ENCODE measurements at regions of chr2 and their contacts with region 1.

Region 1: GRCh38 chr2:190511104-190511503 is 23.4 kb downstream of the NEMP2 start:
- DNase-seq: no peak
- ATAC-seq: no peak
- H3K4me3 Mint-ChIP-seq: no peak overlapping the region
- H3K27ac Mint-ChIP-seq: peak overlapping the region; percentile 12
- H3K4me1 Mint-ChIP-seq: peaks cover 18% of the 10 kb centered on the region
- H3K27me3 Mint-ChIP-seq: no peaks in the 10 kb centered on the region
- CTCF ChIP-seq: no peak

Region 2: GRCh38 chr2:190328573-190329147 is 182.4 kb before region 1 on chr2:
- CTCF ChIA-PET with region 1: no interaction called
- POLR2A ChIA-PET with region 1: no interaction called
- intact Hi-C with region 1: no loop called
- DNase-seq: no peak
- ATAC-seq: no peak
- H3K4me3 Mint-ChIP-seq: no peak overlapping the region
- H3K27ac Mint-ChIP-seq: no peak overlapping the region
- H3K4me1 Mint-ChIP-seq: no peaks in the 10 kb centered on the region
- H3K27me3 Mint-ChIP-seq: peaks cover 14% of the 10 kb centered on the region
- CTCF ChIP-seq: no peak

Region 3: DNA sequence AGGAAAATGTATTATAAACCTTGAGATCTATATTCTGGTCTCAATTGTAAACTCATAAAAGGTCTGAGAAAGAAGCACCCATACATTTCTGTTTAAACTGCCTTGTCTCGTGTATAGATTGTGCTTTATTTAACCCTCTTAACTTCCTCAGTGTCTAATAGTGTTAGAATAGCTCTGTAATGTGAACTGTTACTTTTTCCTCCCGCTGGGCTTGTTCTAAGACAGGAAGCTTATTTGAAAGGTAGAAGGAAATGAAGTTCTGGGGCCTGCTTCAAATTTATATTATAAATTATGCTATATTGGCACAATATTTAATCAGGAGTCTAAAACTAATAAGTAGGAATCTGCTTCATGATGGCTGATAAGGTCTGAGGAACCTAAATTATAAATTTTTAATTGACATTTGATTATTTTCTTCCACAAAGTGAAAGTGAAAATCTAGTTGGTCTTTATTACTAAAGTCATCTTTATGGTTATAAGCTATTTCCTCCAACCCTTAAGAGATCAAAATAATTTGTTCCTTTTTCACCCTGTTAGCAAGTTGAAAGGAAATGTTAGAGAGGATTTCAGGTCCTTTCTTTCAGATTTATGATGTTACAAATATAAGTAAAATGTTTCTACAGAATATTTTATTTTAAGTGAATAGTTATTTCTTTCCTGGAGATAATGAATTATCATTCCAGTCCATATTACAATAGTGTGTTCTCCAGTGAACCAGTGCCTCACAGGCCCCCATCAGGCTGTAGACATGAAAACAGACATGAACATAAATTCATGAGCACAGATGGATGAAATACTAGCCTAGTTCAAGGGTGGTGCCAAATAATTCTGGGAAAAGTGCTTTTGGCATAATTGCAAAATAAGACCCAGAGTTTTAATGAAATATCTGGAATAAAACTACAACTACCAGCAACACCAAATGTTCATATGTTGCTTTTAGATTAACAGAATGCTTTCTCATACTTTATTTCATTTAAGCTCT is 95.0 kb before region 1 on chr2:
- CTCF ChIA-PET with region 1: no interaction called
- POLR2A ChIA-PET with region 1: no interaction called
- intact Hi-C with region 1: loop called (anchors 10 kb)
- DNase-seq: no peak
- ATAC-seq: peak; percentile 59
- H3K4me3 Mint-ChIP-seq: peak overlapping the region; percentile 62
- H3K27ac Mint-ChIP-seq: peak overlapping the region; percentile 91
- H3K4me1 Mint-ChIP-seq: peaks cover 75% of the 10 kb centered on the region
- H3K27me3 Mint-ChIP-seq: no peaks in the 10 kb centered on the region
- CTCF ChIP-seq: no peak